Heart right ventricle (tissue), 16 donors: ENCODE measurements at regions of chr21 and their contacts with region 1.

Region 1: GRCh38 chr21:42440187-42440792 is 36.6 kb downstream of the UBASH3A start:
- DNase-seq: no peak
- ATAC-seq: no peak
- H3K4me3 ChIP-seq: no peak overlapping the region
- H3K27ac ChIP-seq: no peak overlapping the region
- H3K4me1 ChIP-seq: no peaks in the 10 kb centered on the region
- H3K27me3 ChIP-seq: peaks cover 0 to 29% (median 14%) of the 10 kb centered on the region in 7 donors
- CTCF ChIP-seq: no peak

Region 2: DNA sequence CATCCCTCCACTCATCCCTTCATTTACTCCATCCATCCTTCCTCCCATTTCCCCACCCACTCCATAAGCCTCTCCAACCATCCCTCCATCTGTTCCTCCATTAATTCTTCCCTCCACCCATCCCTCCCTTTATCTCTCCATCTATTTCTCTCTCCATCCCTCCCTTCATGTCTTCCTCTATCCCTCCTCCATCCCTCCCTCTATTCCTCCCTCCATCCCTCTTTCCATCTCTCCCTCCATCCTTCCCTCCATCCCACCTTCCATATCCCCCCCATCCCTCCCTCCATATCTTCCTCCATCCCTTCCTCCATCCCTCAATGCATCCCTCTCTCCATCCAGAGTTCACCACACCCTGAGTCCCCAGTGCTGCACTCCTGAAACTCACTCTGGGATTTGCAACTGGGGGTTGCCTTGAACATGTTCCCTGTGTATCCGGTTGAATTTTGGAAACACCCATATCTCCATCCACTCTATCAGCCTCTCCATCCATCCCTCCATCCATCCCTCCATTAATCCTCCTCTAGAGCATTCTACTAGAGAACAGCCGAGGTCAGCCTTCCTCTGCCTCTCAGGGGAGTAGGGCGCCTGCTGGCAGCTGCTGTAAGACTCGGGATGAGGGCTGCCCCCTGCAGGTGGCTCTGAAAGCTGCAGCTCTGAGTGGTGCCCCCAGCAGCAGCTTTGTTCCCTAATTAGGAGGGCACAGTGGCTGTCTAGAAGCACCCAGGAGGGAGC is 182.0 kb before region 1 on chr21:
- intact Hi-C with region 1: no loop called
- DNase-seq: peak; percentile 65 to 80
- ATAC-seq: peak in 7 of 8 donors; percentile 42 to 71 (median 59)
- H3K4me3 ChIP-seq: no peak overlapping the region
- H3K27ac ChIP-seq: peak overlapping the region in 1 of 10 donors; percentile 29
- H3K4me1 ChIP-seq: peaks cover 13 to 73% (median 46%) of the 10 kb centered on the region in 9 donors
- H3K27me3 ChIP-seq: no peaks in the 10 kb centered on the region
- CTCF ChIP-seq: peak; percentile 61 to 92 (median 78)

Region 3: GRCh38 chr21:42309753-42310221 is 130.5 kb before region 1 on chr21:
- intact Hi-C with region 1: loop called in 2 of 10 experiments (anchors 10 kb)
- DNase-seq: peak; percentile 37 to 50
- ATAC-seq: peak in 7 of 8 donors; percentile 36 to 66 (median 48)
- H3K4me3 ChIP-seq: no peak overlapping the region
- H3K27ac ChIP-seq: no peak overlapping the region
- H3K4me1 ChIP-seq: peaks cover 0 to 31% (median 24%) of the 10 kb centered on the region in 9 donors
- H3K27me3 ChIP-seq: peaks cover 0 to 53% (median 15%) of the 10 kb centered on the region in 7 donors
- CTCF ChIP-seq: peak; percentile 54 to 78 (median 75)

Region 4: GRCh38 chr21:42337830-42338728 is 102.2 kb before region 1 on chr21:
- intact Hi-C with region 1: loop called in 4 of 10 experiments (anchors 10 kb)
- DNase-seq: peak; percentile 50 to 53
- ATAC-seq: peak; percentile 33 to 86 (median 76)
- H3K4me3 ChIP-seq: no peak overlapping the region
- H3K27ac ChIP-seq: no peak overlapping the region
- H3K4me1 ChIP-seq: peaks cover 0 to 7% (median 0%) of the 10 kb centered on the region in 9 donors
- H3K27me3 ChIP-seq: peaks cover 0 to 42% (median 23%) of the 10 kb centered on the region in 7 donors
- CTCF ChIP-seq: peak; percentile 18 to 73 (median 60)

Region 5: DNA sequence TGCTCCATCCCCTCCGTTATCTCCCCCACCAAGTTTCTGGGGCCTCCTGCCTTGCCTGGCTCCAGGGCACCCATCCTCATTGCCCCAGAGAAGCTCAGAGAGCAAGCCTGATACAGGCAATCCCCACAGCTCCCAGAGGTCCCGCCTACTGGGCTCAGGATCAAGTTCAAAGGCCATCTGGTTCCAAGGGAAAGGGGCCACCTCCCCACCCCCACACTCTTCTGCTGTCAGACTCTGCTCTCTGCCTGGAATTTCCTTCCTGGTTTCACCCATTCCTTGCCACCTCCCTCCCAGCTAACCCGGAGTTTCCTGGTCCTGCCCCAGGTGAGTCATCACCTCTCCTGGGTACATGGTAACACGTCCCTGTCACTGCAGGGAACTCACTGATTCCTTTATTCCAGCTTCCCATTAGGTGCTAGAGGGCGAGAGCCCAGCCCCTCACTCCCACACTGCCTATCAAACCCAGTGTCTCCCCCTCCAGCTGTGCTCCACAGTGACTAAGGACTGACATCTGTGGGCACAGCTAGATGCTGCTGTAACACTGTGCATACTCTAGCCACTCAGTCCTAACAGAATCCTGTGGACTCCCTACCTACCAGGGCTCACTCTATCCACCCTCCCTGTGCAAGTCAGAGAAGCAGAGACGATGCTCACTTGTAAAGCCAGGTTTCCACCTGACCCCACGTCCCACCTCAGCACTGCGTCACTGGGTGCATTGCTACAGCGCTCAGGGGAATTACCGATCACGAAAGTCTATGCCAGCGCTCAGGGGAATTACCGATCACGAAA is 33.9 kb after region 1 on chr21:
- intact Hi-C with region 1: no loop called
- DNase-seq: no peak
- ATAC-seq: peak in 1 of 8 donors; percentile 59
- H3K4me3 ChIP-seq: no peak overlapping the region
- H3K27ac ChIP-seq: no peak overlapping the region
- H3K4me1 ChIP-seq: peaks cover 0 to 10% (median 0%) of the 10 kb centered on the region in 9 donors
- H3K27me3 ChIP-seq: peaks cover 0 to 4% (median 0%) of the 10 kb centered on the region in 7 donors
- CTCF ChIP-seq: no peak

Region 6: GRCh38 chr21:42556960-42557359 is 116.7 kb after region 1 on chr21:
- intact Hi-C with region 1: no loop called
- DNase-seq: no peak
- ATAC-seq: no peak
- H3K4me3 ChIP-seq: no peak overlapping the region
- H3K27ac ChIP-seq: no peak overlapping the region
- H3K4me1 ChIP-seq: no peaks in the 10 kb centered on the region
- H3K27me3 ChIP-seq: no peaks in the 10 kb centered on the region
- CTCF ChIP-seq: no peak